ENCODE measurements at regions of chr5 and their contacts with region 1.

Region 1: GRCh38 chr5:147949711-147950573 is 43.6 kb upstream of the C5orf46 start:
- DNase-seq: no peak
- ATAC-seq: peak; percentile 72

Region 2: GRCh38 chr5:148120317-148120716 is 170.4 kb after region 1 on chr5:
- intact Hi-C with region 1: loop called in 1 of 2 experiments (anchors 5 kb)
- DNase-seq: no peak
- ATAC-seq: no peak

Measured in left colon (tissue), 2 donors.